Activated T-helper 2 cell treated with anti-CD3 and anti-CD28 coated beads, Interferon-gamma antibody, Interleukin-2, Interleukin-4, amounts not matched to agents 10 μg/mL and 5 μg/mL and 100 μg/mL, durations not matched to agents 14 hours and 24 hours and 36 hours (primary cell): ENCODE measurements at regions of chr3 and their contacts with region 1.

Region 1: DNA sequence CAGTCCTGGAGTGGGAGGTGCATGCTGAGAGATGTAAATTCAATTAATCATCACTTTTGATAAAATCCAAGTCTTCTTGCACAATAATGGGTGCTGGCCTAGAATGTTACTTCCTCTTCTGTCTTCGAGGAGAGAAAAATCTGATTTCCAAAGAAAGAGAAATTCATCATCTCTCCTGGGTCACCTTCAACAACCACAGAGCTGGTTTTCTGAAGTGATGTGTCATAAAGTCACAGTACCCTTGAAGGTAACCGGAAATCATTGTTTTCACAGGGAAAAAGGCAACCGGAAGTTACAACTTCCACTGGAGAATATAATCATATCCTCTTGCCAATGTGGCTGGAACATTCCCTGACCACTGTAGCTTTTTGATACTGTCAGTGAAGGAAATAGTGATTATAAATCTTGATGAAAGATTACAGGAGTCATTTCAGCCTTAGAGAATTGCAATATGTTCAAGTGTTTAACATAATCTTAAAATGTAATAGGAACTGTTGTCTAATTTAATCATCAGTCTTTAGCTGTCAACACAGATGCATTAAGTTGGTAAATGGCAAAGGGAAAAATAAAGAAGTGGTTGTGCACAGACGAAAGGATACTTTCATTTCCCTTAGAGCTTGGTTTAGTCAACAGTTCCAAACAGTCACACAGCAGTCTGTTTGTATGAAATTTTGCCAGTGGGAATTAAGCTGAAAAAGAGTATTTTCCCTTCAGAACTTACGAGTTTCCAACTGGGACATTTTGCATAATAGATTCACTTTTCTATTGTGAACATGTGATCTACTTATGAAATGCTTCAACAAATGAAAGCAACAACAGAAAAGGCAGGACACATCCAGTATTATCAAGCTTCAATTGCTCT is 106.5 kb upstream of the SLC4A7 start:
- DNase-seq: no peak
- H3K4me3 Mint-ChIP-seq: peak overlapping the region; percentile 38
- H3K27ac Mint-ChIP-seq: peak overlapping the region; percentile 81
- H3K4me1 Mint-ChIP-seq: peaks cover 32% of the 10 kb centered on the region
- H3K27me3 Mint-ChIP-seq: no peaks in the 10 kb centered on the region

Region 2: GRCh38 chr3:27533718-27534573 is 56.7 kb before region 1 on chr3:
- intact Hi-C with region 1: loop called (anchors 2 kb)
- DNase-seq: no peak
- H3K4me3 Mint-ChIP-seq: no peak overlapping the region
- H3K27ac Mint-ChIP-seq: peak overlapping the region; percentile 82
- H3K4me1 Mint-ChIP-seq: peaks cover 21% of the 10 kb centered on the region
- H3K27me3 Mint-ChIP-seq: no peaks in the 10 kb centered on the region

Region 3: DNA sequence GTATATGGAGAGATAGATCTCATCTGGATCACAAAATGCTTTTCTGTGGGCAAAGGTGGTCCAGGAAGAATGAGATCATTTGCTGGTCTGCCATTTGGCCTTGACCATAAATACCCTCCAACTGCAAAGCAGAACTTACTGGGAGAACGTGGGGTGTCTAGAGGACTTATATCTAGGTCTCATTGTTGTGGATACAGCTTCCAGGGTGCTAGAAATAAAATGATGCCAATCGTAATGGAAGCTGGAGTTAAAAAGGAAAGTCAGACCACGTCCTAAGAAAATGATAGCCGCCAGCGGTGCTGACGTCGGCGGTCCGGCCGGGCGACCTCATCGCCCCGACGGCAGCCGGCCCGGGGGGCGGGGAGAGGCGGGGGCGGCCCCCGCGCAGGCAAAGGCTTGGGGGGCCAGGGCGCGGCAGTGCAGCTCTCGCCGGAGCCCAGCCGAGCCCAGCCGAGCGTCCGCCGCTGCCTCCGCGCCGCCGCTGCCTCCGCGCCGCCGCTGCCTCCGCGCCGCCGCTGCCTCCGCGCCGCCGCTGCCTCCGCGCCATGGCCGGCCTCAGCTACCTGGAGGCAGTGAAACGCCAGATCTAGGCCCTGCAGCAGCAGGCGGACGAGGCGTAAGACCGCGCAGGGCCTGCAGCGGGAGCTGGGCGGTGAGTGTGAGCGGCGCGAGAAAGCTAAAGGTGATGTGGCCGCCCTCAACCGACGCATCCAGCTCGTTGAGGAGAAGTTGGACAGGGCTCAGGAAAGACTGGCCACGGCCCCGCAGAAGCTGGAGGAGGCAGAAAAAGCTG is 42.0 kb after region 1 on chr3:
- intact Hi-C with region 1: loop called (anchors 1 kb)
- DNase-seq: peak; percentile 34
- H3K4me3 Mint-ChIP-seq: peak overlapping the region; percentile 93
- H3K27ac Mint-ChIP-seq: peak overlapping the region; percentile 90
- H3K4me1 Mint-ChIP-seq: peaks cover 44% of the 10 kb centered on the region
- H3K27me3 Mint-ChIP-seq: no peaks in the 10 kb centered on the region

Region 4: GRCh38 chr3:27669591-27669990 is 78.9 kb after region 1 on chr3:
- intact Hi-C with region 1: no loop called
- DNase-seq: no peak
- H3K4me3 Mint-ChIP-seq: no peak overlapping the region
- H3K27ac Mint-ChIP-seq: no peak overlapping the region
- H3K4me1 Mint-ChIP-seq: peaks cover 13% of the 10 kb centered on the region
- H3K27me3 Mint-ChIP-seq: no peaks in the 10 kb centered on the region

Region 5: DNA sequence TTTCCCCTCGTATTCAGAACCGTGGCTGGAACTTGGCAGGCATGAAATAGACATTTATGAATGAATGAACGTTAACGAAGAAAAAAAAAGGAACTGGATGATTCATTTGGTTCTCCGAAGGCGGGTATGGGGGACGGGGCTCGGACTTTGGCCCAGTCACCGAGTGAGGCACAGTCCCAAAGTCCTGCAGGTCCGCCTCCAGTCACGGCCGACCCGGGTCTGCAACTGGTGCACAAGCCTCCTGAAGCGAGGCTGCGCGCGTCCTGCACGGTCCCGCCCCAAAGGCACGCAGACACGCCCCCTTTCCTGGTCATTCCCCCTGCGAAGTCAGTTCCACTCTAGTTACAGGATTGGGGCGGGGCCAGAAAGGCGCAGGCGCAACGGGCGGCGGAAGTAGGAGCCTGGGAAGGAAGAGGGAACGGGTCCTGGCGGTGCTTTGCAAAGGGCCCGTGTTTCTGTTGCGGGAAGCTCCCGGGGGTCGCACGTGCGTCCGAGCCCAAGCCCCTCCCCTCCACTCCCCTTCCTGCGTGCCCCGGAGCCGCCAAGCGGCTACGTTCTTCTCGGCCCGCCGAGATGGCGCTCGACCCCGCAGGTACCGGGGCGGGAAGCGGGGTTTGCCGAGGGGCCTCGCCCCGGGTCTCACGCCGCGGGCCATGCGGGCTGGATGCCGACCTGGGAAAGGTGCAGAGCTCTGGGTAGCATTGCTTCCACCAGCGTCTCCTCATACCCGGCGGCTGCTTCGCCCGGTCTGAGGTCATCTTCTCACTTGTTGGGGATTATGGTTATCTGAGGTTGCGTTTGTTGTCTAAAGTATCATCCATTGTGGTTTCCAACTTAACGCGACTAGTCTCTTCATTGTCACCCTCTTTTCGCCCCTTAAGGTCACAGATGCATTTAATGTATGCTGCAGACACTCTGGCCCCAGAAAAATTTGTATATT is 650.8 kb after region 1 on chr3 and contains the start of gene CMC1:
- intact Hi-C with region 1: loop called (anchors 5 kb)
- DNase-seq: peak; percentile 86
- H3K4me3 Mint-ChIP-seq: peak within 1 kb of the TSS; percentile 89
- H3K27ac Mint-ChIP-seq: peak within 1 kb of the TSS; percentile 93
- H3K4me1 Mint-ChIP-seq: peaks cover 38% of the 10 kb centered on the region
- H3K27me3 Mint-ChIP-seq: no peaks in the 10 kb centered on the region
- total RNA-seq, gene CMC1: 20.6 and 23.5 TPM in 2 replicates